Left cardiac atrium (tissue), 4 donors: ENCODE measurements at regions of chr5 and their contacts with region 1.

Region 1: GRCh38 chr5:174951146-174951780 is 226.9 kb downstream of the MSX2 start:
- DNase-seq: peak; percentile 52
- ATAC-seq: peak; percentile 82 to 86

Region 2: GRCh38 chr5:175344331-175345195 is 393.3 kb after region 1 on chr5:
- intact Hi-C with region 1: no loop called
- DNase-seq: peak; percentile 28
- ATAC-seq: peak; percentile 67 to 82

Region 3: GRCh38 chr5:175444060-175444904 is 493.0 kb after region 1 on chr5 and contains the start of gene DRD1:
- intact Hi-C with region 1: loop called (anchors 5 kb)
- DNase-seq: peak; percentile 30
- ATAC-seq: peak; percentile 90
- total RNA-seq, gene DRD1: 0.15 to 0.55 TPM

Region 4: DNA sequence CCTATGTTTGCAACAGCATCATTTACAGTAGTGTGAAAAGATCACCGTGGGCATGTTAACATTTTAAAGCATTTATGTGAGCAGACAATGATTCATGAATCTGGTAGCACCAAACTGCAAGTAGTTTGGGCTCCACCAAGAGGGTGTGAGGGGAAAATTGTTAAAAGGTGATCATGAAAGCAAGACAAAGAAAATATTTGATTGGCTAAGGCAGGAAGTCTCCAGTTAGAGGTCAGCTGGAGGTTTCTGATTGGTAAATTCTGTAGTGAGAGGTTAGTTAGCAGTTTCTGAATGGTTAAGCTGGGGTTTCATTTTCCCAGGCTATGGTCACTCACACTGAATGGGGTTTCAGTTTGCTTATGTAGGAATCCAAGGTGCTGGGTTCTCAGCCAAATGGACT is 506.2 kb after region 1 on chr5:
- intact Hi-C with region 1: loop called (anchors 5 kb)
- DNase-seq: no peak
- ATAC-seq: no peak

Region 5: GRCh38 chr5:175464074-175464941 is 513.0 kb after region 1 on chr5:
- intact Hi-C with region 1: loop called (anchors 5 kb)
- DNase-seq: no peak
- ATAC-seq: peak in 1 of 2 donors; percentile 77